OCI-LY7 (cell line): ENCODE measurements at regions of chrX and their contacts with region 1.

Region 1: GRCh38 chrX:151402719-151403390 is 5.8 kb downstream of the VMA21 start:
- DNase-seq: no peak
- H3K4me3 ChIP-seq: no peak overlapping the region
- H3K27ac ChIP-seq: no peak overlapping the region
- H3K4me1 ChIP-seq: peaks cover 15% of the 10 kb centered on the region
- CTCF ChIP-seq: no peak

Region 2: GRCh38 chrX:150898343-150899190 is 504.3 kb before region 1 on chrX and contains the start of gene CD99L2:
- CTCF ChIA-PET with region 1: no interaction called
- POLR2A ChIA-PET with region 1: no interaction called
- intact Hi-C with region 1: loop called (anchors 5 kb)
- DNase-seq: peak; percentile 87
- H3K4me3 ChIP-seq: peak within 1 kb of the TSS; percentile 88
- H3K27ac ChIP-seq: peak within 1 kb of the TSS; percentile 24
- H3K4me1 ChIP-seq: peaks cover 11% of the 10 kb centered on the region
- CTCF ChIP-seq: no peak
- total RNA-seq, gene CD99L2: 5.6 and 5.9 TPM in 2 replicates